ENCODE measurements at regions of chr5 and their contacts with region 1.

Region 1: DNA sequence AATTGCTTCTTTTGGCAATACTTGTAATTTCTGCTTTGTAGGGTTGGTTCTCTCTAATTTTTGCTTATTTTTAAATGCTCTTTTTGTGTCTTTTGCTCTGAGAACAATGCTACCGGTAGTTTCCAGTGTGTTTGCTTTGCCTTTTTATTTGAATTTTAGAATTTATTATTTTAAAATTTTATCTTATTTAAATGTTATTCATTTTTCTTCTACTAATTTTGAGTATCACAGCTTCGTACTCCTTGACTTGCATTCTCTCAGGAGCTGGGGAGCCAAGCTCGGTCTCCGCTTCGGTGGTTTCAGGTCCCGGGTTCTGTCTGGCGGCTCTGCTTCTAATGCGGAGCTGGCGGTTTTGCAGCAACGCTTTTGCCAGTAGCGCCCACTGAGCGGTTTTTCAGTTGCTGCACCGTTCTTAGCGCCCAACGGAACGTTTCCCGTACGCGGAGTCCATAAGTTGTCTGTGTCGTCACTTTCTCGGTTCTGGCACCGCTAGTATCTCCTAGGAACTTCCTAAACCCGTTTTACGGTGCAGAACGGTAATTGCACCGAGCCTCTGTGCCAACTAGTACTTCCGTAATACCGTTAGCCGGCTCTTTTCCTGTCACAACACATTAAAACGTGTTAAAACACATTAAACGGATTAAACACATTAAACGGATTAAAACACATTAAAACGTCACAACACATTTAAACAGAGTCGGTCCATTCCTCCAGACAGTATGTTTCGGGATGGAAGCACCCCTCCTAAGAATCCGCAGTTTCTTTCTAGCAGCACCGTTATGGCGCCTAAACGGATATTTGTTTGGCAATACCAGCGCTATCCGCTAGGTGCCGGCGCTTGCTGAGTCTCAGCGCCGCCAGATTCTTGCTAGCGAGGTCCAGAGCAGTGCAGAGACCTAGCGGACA is 45.6 kb downstream of the ANXA2R start:
- DNase-seq: peak; percentile 89
- ATAC-seq: peak; percentile 80

Region 2: GRCh38 chr5:42950440-42951292 is 43.8 kb before region 1 on chr5:
- intact Hi-C with region 1: loop called (anchors 5 kb)
- DNase-seq: peak; percentile 52
- ATAC-seq: peak; percentile 86

Region 3: GRCh38 chr5:43105369-43106289 is 111.1 kb after region 1 on chr5:
- intact Hi-C with region 1: no loop called
- DNase-seq: peak; percentile 90
- ATAC-seq: peak; percentile 93